Activated naive CD4-positive, alpha-beta T cell treated with anti-CD3 and anti-CD28 coated beads for 36 hours (primary cell): ENCODE measurements at regions of chr5 and their contacts with region 1.

Region 1: DNA sequence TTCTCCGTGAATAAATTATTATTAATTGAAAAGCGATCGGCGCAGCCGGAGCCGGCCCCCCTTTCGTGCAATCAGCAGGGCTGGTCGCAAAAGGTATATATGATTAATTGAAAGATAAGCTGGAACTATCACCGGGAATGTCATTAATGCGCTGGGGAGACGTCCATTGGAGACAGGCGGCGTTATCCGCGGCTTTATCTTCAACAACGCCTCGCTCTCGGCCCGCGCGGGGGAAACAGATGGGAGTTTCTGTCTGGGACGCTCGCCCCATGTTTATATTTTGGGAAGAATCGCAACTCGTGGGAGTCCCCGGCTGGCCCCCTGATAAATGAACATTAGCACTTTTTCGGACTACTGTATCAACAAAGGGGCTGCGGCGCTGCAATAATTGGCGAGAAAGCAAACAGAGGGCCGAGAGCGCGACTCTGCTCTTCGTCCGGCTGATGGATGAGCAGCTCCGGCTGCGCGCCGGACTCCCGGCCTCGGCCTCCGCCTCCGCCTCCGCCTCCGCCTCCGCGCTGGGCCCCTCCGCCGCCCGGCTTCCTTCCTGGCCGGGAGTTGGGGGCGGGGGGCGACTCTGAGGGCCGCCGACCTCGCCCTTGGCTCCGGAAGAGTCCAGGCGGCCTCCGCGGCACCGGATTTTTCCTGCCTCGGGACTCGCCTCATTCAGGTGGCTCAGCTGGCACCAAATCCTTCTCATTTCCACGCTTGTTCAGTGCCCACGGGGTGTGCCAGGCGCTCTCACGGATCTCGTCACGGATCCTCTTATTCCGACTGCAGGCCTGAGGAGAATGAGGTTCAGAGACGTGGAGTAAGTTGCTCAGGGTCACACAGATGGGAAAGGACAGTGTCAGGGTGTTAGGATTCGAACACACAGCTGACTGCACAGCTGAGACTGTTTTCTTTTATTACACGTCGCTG is 3.6 kb upstream of the NKX2-5 start:
- DNase-seq: no peak
- H3K4me3 Mint-ChIP-seq: peak overlapping the region; percentile 47
- H3K27ac Mint-ChIP-seq: no peak overlapping the region
- H3K4me1 Mint-ChIP-seq: peaks cover 45% of the 10 kb centered on the region
- H3K27me3 Mint-ChIP-seq: peaks cover 85% of the 10 kb centered on the region

Region 2: GRCh38 chr5:171314728-171315385 is 1923.7 kb before region 1 on chr5:
- CTCF ChIA-PET with region 1: no interaction called
- intact Hi-C with region 1: loop called (anchors 5 kb)
- DNase-seq: no peak
- H3K4me3 Mint-ChIP-seq: no peak overlapping the region
- H3K27ac Mint-ChIP-seq: no peak overlapping the region
- H3K4me1 Mint-ChIP-seq: peaks cover 25% of the 10 kb centered on the region
- H3K27me3 Mint-ChIP-seq: peaks cover 67% of the 10 kb centered on the region

Region 3: GRCh38 chr5:174724491-174725260 is 1486.1 kb after region 1 on chr5 and contains the start of gene MSX2:
- CTCF ChIA-PET with region 1: no interaction called
- intact Hi-C with region 1: loop called (anchors 10 kb)
- DNase-seq: peak; percentile 52
- H3K4me3 Mint-ChIP-seq: peak within 1 kb of the TSS; percentile 35
- H3K27ac Mint-ChIP-seq: no peak within 1 kb of the TSS
- H3K4me1 Mint-ChIP-seq: peaks cover 17% of the 10 kb centered on the region
- H3K27me3 Mint-ChIP-seq: peaks cover 88% of the 10 kb centered on the region
- total RNA-seq, gene MSX2: not detected